ENCODE measurements at regions of chr1 and their contacts with region 1.

Region 1: DNA sequence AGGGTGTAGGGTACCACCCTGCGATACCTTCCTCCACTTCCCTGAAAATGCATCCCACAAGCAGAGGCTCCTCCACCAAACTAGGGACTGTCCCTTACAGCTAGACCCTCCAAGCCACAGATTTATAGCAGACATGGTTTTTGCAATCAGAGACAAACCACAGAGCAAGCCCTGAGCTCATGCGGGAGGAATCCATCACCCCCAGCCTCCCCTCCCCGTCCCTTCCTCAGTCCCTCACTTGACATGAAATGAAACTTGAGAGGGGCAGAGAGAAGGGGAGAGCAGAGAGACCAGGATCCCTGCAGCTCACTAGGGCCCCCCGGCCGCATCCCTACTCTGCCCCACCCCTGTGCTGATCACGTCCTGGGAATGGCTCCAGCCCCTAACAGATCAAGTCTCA is 94.9 kb downstream of the MRPL37 start:
- DNase-seq: no peak
- H3K4me3 ChIP-seq: no peak overlapping the region
- H3K27ac ChIP-seq: no peak overlapping the region
- H3K4me1 ChIP-seq: peaks cover 0 to 53% (median 46%) of the 10 kb centered on the region in 4 experiments
- H3K27me3 ChIP-seq: no peaks in the 10 kb centered on the region

Region 2: DNA sequence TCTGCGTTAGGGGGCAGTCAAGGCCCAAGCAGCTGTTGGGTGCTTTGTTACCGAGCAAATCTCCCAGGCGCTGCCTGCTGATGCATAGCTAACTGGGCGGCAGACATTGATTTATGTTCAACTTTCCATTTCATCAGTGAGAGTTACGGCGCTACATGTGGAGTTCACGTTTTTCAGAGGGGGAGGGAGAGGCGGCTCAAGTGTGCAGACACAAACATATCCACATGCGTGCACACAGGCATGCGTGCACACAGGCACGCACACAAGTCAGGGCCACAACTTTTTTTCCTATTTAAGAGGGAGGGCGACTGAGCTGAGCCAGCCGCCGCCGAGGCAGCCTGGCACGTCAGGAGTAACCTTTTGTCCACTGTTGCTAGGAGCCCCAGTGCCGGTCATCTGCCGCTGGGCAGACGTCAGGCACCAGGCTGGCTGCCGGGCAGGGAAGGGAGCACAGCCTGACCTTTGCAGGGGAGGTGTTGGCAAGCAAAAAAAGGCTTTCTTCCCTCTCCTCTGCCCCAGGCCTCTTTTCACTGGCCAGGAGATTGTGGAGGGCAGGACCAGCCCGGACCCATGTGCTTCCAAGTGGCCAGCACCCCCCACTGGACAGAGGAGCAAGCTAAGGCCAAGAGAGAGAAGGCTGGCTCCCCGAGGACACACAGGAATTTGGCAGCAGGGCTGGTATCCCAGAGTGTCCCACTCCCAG is 21.6 kb before region 1 on chr1:
- CTCF ChIA-PET with region 1: interaction called, 11 read pairs
- POLR2A ChIA-PET with region 1: no interaction called
- DNase-seq: peak in 2 of 3 donors; percentile 48 to 63
- H3K4me3 ChIP-seq: no peak overlapping the region
- H3K27ac ChIP-seq: peak overlapping the region in 1 of 2 experiments; percentile 30
- H3K4me1 ChIP-seq: peaks cover 0 to 13% (median 5%) of the 10 kb centered on the region in 4 experiments
- H3K27me3 ChIP-seq: no peaks in the 10 kb centered on the region

Measured in common myeloid progenitor, CD34-positive (primary cell).